CD4-positive, alpha-beta memory T cell (primary cell): ENCODE measurements at regions of chr10 and their contacts with region 1.

Region 1: DNA sequence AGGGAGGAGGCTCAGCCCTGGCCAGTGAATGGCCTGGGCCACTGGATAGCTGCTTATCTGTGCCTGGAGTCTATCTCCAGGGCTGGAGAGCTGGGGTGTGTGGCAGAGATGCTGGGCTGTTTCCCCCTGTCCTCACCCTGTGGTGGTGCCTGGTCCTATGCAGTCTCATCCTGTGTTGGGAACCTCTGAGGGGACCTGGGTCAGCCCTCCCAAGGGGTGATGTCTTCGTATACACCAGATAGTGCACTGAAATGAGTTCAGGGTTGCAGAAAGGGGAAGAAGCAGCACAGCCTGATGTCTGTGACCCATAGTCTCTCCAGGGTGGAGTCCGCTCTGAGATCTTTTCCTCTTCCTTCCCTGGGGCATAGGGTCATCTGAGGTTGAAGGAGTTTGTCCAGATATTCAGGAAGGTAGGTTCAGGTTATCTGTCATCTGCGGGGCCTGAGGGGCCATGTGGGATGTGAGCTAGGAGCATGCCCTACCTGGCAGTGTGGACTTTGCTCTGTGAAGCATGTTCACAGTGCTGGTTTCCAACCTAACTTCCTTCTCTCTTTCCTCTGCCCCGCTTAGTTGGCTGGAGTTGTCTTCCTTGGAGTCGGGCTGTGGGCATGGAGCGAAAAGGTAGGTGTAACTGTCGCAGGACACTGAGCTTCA is 33.4 kb upstream of the SH2D4B start:
- DNase-seq: no peak
- H3K4me3 ChIP-seq: no peak overlapping the region
- H3K4me3 Mint-ChIP-seq: peak overlapping the region in 5 of 8 donors; percentile 7 to 66 (median 47)
- H3K27ac ChIP-seq: peak overlapping the region; percentile 51
- H3K27ac Mint-ChIP-seq: peak overlapping the region; percentile 83 to 94 (median 90)
- H3K4me1 ChIP-seq: peaks cover 69% of the 10 kb centered on the region
- H3K4me1 Mint-ChIP-seq: peaks cover 61 to 79% (median 69%) of the 10 kb centered on the region in 4 donors
- H3K27me3 ChIP-seq: no peaks in the 10 kb centered on the region
- H3K27me3 Mint-ChIP-seq: no peaks in the 10 kb centered on the region

Region 2: GRCh38 chr10:80437231-80437630 is 67.1 kb before region 1 on chr10:
- CTCF ChIA-PET with region 1: interaction called, 814 read pairs
- POLR2A ChIA-PET with region 1: interaction called, 713 read pairs
- intact Hi-C with region 1: no loop called
- DNase-seq: no peak
- H3K4me3 ChIP-seq: no peak overlapping the region
- H3K4me3 Mint-ChIP-seq: peak overlapping the region in 1 of 8 donors; percentile 7
- H3K27ac ChIP-seq: no peak overlapping the region
- H3K27ac Mint-ChIP-seq: no peak overlapping the region
- H3K4me1 ChIP-seq: no peaks in the 10 kb centered on the region
- H3K4me1 Mint-ChIP-seq: no peaks in the 10 kb centered on the region
- H3K27me3 ChIP-seq: no peaks in the 10 kb centered on the region
- H3K27me3 Mint-ChIP-seq: peaks cover 0 to 6% of the 10 kb centered on the region in 2 donors

Region 3: DNA sequence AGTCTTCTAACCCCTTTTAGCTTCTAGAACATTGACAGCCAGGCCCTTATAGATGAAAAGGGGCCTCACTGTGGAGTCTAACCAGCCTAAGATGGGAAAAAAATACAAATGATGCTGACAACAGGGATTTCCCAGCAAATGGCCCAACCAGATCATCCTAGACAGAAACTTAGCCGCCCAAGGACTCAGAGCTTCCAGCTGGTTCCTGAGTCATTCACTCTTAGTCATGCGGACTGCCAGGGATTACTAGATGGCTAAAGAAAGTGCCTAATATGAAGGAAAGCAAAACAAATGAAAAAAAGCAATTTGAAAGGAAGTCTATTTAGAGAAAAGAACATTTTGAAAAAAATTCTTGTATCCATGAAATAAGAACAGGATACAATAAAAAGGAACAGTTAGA is 26.5 kb before region 1 on chr10:
- CTCF ChIA-PET with region 1: interaction called, 516 read pairs
- POLR2A ChIA-PET with region 1: interaction called, 713 read pairs
- intact Hi-C with region 1: no loop called
- DNase-seq: peak in 1 of 5 donors; percentile 47
- H3K4me3 ChIP-seq: no peak overlapping the region
- H3K4me3 Mint-ChIP-seq: peak overlapping the region in 4 of 8 donors; percentile 7 to 68 (median 54)
- H3K27ac ChIP-seq: no peak overlapping the region
- H3K27ac Mint-ChIP-seq: peak overlapping the region; percentile 61 to 91 (median 76)
- H3K4me1 ChIP-seq: peaks cover 79% of the 10 kb centered on the region
- H3K4me1 Mint-ChIP-seq: peaks cover 51 to 82% (median 69%) of the 10 kb centered on the region in 4 donors
- H3K27me3 ChIP-seq: no peaks in the 10 kb centered on the region
- H3K27me3 Mint-ChIP-seq: no peaks in the 10 kb centered on the region

Region 4: GRCh38 chr10:80493522-80494051 is 10.7 kb before region 1 on chr10:
- CTCF ChIA-PET with region 1: interaction called, 201 read pairs
- POLR2A ChIA-PET with region 1: interaction called, 202 read pairs
- intact Hi-C with region 1: loop called (anchors 1 kb)
- DNase-seq: peak in 4 of 5 donors; percentile 49 to 73 (median 52)
- H3K4me3 ChIP-seq: no peak overlapping the region
- H3K4me3 Mint-ChIP-seq: peak overlapping the region; percentile 49 to 81 (median 70)
- H3K27ac ChIP-seq: peak overlapping the region; percentile 41
- H3K27ac Mint-ChIP-seq: peak overlapping the region; percentile 53 to 87 (median 77)
- H3K4me1 ChIP-seq: peaks cover 100% of the 10 kb centered on the region
- H3K4me1 Mint-ChIP-seq: peaks cover 90 to 100% (median 94%) of the 10 kb centered on the region in 4 donors
- H3K27me3 ChIP-seq: no peaks in the 10 kb centered on the region
- H3K27me3 Mint-ChIP-seq: no peaks in the 10 kb centered on the region

Region 5: DNA sequence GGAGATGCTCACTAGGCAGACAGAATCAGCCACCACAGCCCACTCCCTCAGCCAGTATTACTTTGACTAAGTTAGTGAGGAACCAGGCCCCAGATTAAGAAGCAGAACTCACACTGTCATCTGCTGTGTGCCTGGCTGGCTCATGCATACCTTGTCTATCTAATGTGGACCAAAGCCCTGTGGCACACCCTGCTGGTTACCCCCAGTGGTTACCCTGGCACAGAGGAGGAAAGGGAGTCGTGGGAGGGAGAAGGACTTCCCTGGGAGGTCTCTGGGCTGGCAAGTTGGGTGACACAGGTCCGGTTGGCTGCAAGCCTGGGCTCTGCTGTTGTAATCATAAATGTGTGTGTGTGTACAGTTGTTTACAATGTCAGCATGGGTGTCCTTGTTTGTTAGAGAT is 26.0 kb after region 1 on chr10:
- CTCF ChIA-PET with region 1: interaction called, 19 read pairs
- POLR2A ChIA-PET with region 1: interaction called, 5 read pairs
- intact Hi-C with region 1: loop called (anchors 2 kb)
- DNase-seq: peak in 3 of 5 donors; percentile 22 to 58 (median 36)
- H3K4me3 ChIP-seq: no peak overlapping the region
- H3K4me3 Mint-ChIP-seq: peak overlapping the region in 7 of 8 donors; percentile 34 to 86 (median 75)
- H3K27ac ChIP-seq: peak overlapping the region; percentile 19
- H3K27ac Mint-ChIP-seq: peak overlapping the region; percentile 65 to 96 (median 87)
- H3K4me1 ChIP-seq: peaks cover 71% of the 10 kb centered on the region
- H3K4me1 Mint-ChIP-seq: peaks cover 44 to 79% (median 67%) of the 10 kb centered on the region in 4 donors
- H3K27me3 ChIP-seq: no peaks in the 10 kb centered on the region
- H3K27me3 Mint-ChIP-seq: no peaks in the 10 kb centered on the region